ENCODE measurements at regions of chr10 and their contacts with region 1.

Region 1: DNA sequence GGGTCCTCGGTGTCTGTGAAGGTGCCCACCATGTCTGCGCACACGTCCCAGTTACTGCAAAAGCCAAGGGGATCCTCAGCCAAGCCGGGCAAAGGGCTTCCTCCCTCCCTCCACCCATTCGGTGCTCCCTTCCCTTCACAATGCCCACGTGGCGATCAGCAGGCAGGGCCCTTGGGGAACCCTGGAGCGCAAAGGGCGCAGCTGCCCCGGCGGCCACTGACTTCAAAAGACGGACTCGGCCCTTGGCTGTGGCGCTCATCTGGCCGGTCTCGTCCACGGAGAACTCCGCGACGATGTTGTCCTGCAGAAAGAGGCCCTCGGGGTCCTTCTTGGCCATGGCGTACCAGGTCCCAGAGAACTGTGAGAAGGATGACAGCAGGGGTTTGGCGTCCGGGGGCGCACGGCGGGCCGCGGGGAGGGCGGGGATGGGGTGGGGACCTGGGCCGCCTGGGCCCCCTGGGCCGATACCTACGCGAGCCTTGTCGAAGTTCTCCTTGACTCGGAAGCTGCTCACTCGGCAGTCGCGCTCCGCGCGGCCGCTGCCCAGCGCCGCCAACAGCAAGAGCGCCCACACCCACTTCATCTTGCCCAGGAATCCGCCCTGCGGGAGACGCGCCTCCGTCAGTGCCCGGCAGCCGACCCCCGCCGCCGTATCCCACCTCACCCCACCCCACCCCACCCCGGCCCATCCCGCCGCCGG is 439 bp downstream of the RBP4 start:
- DNase-seq: no peak
- ATAC-seq: peak; percentile 27
- H3K4me3 ChIP-seq: no peak overlapping the region
- H3K27ac ChIP-seq: no peak overlapping the region
- H3K4me1 ChIP-seq: peaks cover 8% of the 10 kb centered on the region; the same call in 1 of the 2 replicates
- H3K27me3 ChIP-seq: no peaks in the 10 kb centered on the region
- CTCF ChIP-seq: no peak

Region 2: GRCh38 chr10:93548376-93549071 is 52.1 kb before region 1 on chr10:
- CTCF ChIA-PET with region 1: no interaction called
- POLR2A ChIA-PET with region 1: no interaction called
- intact Hi-C with region 1: loop called (anchors 2 kb)
- DNase-seq: peak; percentile 91
- ATAC-seq: peak; percentile 84
- H3K4me3 ChIP-seq: no peak overlapping the region
- H3K27ac ChIP-seq: peak overlapping the region; percentile 96
- H3K4me1 ChIP-seq: peaks cover 13% of the 10 kb centered on the region
- H3K27me3 ChIP-seq: no peaks in the 10 kb centered on the region
- CTCF ChIP-seq: no peak

Region 3: DNA sequence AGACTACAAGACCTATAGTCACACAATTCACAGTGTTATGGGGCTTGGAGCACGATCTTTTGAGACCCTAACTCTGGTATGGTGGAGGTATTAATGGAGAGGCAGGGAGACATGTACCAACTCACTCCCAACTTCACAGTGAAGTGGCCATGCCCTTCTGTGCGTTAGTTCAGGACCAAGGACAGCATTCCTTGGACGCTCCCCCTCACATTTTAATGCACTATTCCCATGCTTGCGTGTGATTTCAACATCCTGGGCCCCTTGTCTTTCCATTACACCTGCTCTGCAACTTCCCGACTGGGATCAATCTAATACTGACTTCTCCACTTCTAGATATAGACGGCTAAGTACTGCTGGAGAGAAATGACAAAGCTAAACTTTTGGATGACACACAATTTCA is 465.8 kb after region 1 on chr10:
- CTCF ChIA-PET with region 1: no interaction called
- POLR2A ChIA-PET with region 1: no interaction called
- intact Hi-C with region 1: no loop called
- DNase-seq: peak; percentile 14
- ATAC-seq: no peak
- H3K4me3 ChIP-seq: no peak overlapping the region
- H3K27ac ChIP-seq: no peak overlapping the region
- H3K4me1 ChIP-seq: no peaks in the 10 kb centered on the region
- H3K27me3 ChIP-seq: no peaks in the 10 kb centered on the region
- CTCF ChIP-seq: no peak